Activated CD4-positive, alpha-beta T cell treated with anti-CD3 and anti-CD28 coated beads, Interleukin-2, amount 10 ng/mL, durations not matched to agents 24 days and 14 days (primary cell): ENCODE measurements at regions of chr7 and their contacts with region 1.

Region 1: GRCh38 chr7:108459931-108460551 is 3.8 kb upstream of the NRCAM start:
- DNase-seq: no peak
- H3K4me3 Mint-ChIP-seq: no peak overlapping the region
- H3K27ac Mint-ChIP-seq: no peak overlapping the region
- H3K4me1 Mint-ChIP-seq: peaks cover 10% of the 10 kb centered on the region
- H3K27me3 Mint-ChIP-seq: peaks cover 42% of the 10 kb centered on the region

Region 2: DNA sequence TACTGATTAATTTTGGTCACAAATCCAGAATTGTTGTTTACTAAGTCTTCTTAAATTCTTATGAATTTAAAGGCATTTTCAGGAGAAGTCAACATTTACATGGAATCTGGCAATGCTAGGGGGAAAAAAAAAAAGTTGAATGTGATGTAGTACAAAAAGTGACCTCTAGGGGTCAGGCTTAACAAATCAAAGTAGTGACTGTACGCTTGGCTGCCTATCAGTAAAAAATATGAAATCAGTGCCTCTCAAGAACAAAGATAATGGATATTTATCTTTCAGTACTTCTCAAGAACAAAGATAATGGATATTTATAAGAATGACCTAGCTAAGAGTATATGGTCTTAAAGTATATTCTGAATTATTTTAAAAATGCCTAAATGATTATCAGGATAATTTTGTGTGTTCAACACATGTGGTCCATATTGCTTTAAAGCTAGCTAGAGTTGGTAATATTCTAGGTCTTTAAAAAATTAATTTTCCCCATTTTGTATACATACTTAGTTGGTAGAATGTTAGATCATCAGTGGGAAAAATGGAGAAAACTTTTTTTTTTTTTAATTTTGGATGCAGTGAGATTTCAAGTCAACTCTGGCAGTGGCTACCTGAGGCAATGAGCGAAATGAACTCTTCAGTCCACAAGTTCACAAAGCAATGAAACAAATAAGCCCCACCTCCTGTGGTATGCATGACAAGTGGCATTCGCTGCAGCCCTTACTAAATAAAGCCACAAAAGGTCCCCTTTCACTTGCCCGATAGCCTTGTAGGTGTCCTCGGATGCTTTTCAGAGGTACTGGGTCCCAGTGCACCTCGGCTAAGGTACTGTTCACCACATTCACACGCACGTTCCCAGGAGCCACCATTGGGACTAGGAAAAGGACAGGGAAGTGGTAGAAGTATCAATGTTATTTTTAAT is 278.7 kb before region 1 on chr7:
- intact Hi-C with region 1: loop called (anchors 1 kb)
- DNase-seq: peak; percentile 70
- H3K4me3 Mint-ChIP-seq: no peak overlapping the region
- H3K27ac Mint-ChIP-seq: no peak overlapping the region
- H3K4me1 Mint-ChIP-seq: no peaks in the 10 kb centered on the region
- H3K27me3 Mint-ChIP-seq: no peaks in the 10 kb centered on the region

Region 3: GRCh38 chr7:108419961-108420908 is 39.8 kb before region 1 on chr7:
- intact Hi-C with region 1: loop called (anchors 5 kb)
- DNase-seq: no peak
- H3K4me3 Mint-ChIP-seq: no peak overlapping the region
- H3K27ac Mint-ChIP-seq: no peak overlapping the region
- H3K4me1 Mint-ChIP-seq: peaks cover 12% of the 10 kb centered on the region
- H3K27me3 Mint-ChIP-seq: peaks cover 7% of the 10 kb centered on the region

Region 4: DNA sequence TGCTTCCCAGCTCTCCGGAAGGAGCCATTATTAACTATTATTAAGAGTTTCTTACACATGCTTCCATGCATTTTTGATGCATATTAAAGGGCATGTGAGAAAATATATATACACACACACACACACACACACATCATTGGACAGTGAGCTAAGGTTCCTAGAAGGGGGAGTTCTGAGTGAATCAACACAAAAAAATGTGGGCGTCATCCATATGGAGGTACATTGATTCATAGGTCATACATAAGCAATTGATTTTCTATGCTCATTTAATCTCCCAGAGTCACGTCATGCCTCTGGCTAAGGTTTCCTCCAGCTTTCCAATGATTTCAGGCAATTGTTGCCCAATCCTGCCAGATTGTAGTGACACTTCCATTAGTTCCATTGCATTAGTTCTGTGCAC is 379.0 kb after region 1 on chr7:
- intact Hi-C with region 1: no loop called
- DNase-seq: no peak
- H3K4me3 Mint-ChIP-seq: no peak overlapping the region
- H3K27ac Mint-ChIP-seq: no peak overlapping the region
- H3K4me1 Mint-ChIP-seq: no peaks in the 10 kb centered on the region
- H3K27me3 Mint-ChIP-seq: no peaks in the 10 kb centered on the region